ENCODE measurements at regions of chr17 and their contacts with region 1.

Region 1: DNA sequence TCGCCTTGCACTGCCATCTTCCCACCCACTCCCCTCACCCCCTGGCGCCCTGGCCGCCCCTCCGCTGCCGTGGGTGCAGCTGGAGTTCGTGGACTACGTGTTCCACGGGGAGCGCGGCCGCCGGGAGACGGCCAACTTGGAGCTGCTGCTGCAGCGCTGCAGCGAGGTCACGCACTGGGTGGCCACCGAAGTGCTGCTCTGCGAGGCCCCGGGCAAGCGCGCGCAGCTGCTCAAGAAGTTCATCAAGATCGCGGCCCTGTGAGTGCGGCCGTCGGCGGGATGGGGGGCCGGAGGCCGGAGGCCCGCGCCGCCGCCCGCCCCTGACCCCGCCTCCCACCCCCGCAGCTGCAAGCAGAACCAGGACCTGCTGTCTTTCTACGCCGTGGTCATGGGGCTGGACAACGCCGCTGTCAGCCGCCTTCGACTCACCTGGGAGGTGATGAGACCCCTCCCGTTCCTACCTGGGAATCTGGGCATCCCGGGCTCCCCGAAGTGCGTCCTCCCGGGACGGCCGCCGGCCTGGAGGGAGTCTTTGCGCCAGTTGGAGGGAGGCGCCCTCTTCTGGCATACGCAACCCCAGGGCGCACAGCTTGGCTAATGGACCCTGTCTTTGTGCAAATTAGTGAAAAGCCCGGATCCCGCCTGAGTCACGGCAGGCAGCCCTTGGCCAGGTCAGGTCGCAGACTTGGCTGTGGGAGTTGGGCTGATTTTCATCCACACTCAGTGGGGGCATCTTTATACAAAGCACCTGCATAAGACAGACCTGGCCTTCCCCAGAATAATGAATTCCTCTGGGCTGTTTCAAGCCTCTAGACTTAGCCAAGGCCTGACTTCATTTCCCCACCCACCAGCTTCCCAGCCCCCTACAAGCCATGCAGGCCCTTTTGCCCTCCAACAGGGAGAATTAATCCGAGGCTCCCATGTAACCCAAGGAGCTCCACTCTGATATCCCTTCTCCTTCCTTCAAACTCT is 14.3 kb downstream of the RAPGEFL1 start:
- DNase-seq: peak; percentile 41 to 82 (median 62)
- ATAC-seq: peak; percentile 79
- H3K4me3 ChIP-seq: peak overlapping the region; percentile 60
- H3K4me3 Mint-ChIP-seq: peak overlapping the region; percentile 96
- H3K27ac ChIP-seq: no peak overlapping the region
- H3K27ac Mint-ChIP-seq: peak overlapping the region; percentile 60
- H3K4me1 ChIP-seq: peaks cover 14% of the 10 kb centered on the region
- H3K4me1 Mint-ChIP-seq: peaks cover 5% of the 10 kb centered on the region
- H3K27me3 ChIP-seq: no peaks in the 10 kb centered on the region
- H3K27me3 Mint-ChIP-seq: no peaks in the 10 kb centered on the region
- CTCF ChIP-seq: peak; percentile 74

Region 2: GRCh38 chr17:40018211-40019121 is 173.1 kb before region 1 on chr17:
- CTCF ChIA-PET with region 1: interaction called, 10 read pairs
- POLR2A ChIA-PET with region 1: no interaction called
- intact Hi-C with region 1: loop called (anchors 1 to 2 kb)
- DNase-seq: no peak
- ATAC-seq: no peak
- H3K4me3 ChIP-seq: no peak overlapping the region
- H3K4me3 Mint-ChIP-seq: no peak overlapping the region
- H3K27ac ChIP-seq: no peak overlapping the region
- H3K27ac Mint-ChIP-seq: no peak overlapping the region
- H3K4me1 ChIP-seq: peaks cover 5% of the 10 kb centered on the region
- H3K4me1 Mint-ChIP-seq: peaks cover 6% of the 10 kb centered on the region
- H3K27me3 ChIP-seq: no peaks in the 10 kb centered on the region
- H3K27me3 Mint-ChIP-seq: no peaks in the 10 kb centered on the region
- CTCF ChIP-seq: no peak

Region 3: GRCh38 chr17:40168262-40168832 is 23.2 kb before region 1 on chr17:
- CTCF ChIA-PET with region 1: interaction called, 17 read pairs
- POLR2A ChIA-PET with region 1: no interaction called
- intact Hi-C with region 1: no loop called
- DNase-seq: peak in 8 of 14 experiments; percentile 14 to 82 (median 43)
- ATAC-seq: peak; percentile 89
- H3K4me3 ChIP-seq: no peak overlapping the region
- H3K4me3 Mint-ChIP-seq: no peak overlapping the region
- H3K27ac ChIP-seq: no peak overlapping the region
- H3K27ac Mint-ChIP-seq: peak overlapping the region; percentile 80
- H3K4me1 ChIP-seq: no peaks in the 10 kb centered on the region
- H3K4me1 Mint-ChIP-seq: peaks cover 9% of the 10 kb centered on the region
- H3K27me3 ChIP-seq: no peaks in the 10 kb centered on the region
- H3K27me3 Mint-ChIP-seq: no peaks in the 10 kb centered on the region
- CTCF ChIP-seq: peak; percentile 87

Region 4: GRCh38 chr17:40177275-40177874 is 14.1 kb before region 1 on chr17 and contains the start of gene RAPGEFL1:
- CTCF ChIA-PET with region 1: interaction called, 10 read pairs
- POLR2A ChIA-PET with region 1: interaction called, 8 read pairs
- intact Hi-C with region 1: no loop called
- DNase-seq: peak; percentile 72 to 94 (median 83)
- ATAC-seq: peak; percentile 97
- H3K4me3 ChIP-seq: peak within 1 kb of the TSS; percentile 58
- H3K4me3 Mint-ChIP-seq: peak within 1 kb of the TSS; percentile 67
- H3K27ac ChIP-seq: no peak within 1 kb of the TSS
- H3K27ac Mint-ChIP-seq: no peak within 1 kb of the TSS
- H3K4me1 ChIP-seq: peaks cover 20% of the 10 kb centered on the region
- H3K4me1 Mint-ChIP-seq: peaks cover 9% of the 10 kb centered on the region
- H3K27me3 ChIP-seq: no peaks in the 10 kb centered on the region
- H3K27me3 Mint-ChIP-seq: no peaks in the 10 kb centered on the region
- CTCF ChIP-seq: no peak
- total RNA-seq, gene RAPGEFL1: 7.7 to 9.4 TPM

Region 5: DNA sequence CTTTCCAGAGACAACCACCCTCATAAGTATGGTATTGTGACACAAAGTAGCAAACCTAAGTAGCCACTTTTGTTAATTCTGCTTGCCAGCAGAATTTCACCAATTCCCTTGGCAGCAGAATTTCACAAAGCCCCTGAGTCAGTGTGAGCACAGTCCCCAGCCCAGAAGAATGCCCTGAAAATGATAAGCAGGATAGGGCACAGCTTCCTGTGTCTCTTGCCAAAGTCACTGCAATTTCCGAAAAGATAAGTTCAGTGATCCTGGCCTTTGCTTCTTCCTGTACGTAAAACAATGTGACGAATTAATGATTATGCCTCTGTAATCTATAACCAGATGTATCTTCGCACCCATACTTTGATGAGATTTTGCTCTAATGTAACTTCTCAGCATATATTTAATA is 11.6 kb after region 1 on chr17:
- CTCF ChIA-PET with region 1: interaction called, 10 read pairs
- POLR2A ChIA-PET with region 1: interaction called, 5 read pairs
- intact Hi-C with region 1: no loop called
- DNase-seq: no peak
- ATAC-seq: no peak
- H3K4me3 ChIP-seq: no peak overlapping the region
- H3K4me3 Mint-ChIP-seq: no peak overlapping the region
- H3K27ac ChIP-seq: no peak overlapping the region
- H3K27ac Mint-ChIP-seq: no peak overlapping the region
- H3K4me1 ChIP-seq: peaks cover 7% of the 10 kb centered on the region
- H3K4me1 Mint-ChIP-seq: peaks cover 5% of the 10 kb centered on the region
- H3K27me3 ChIP-seq: no peaks in the 10 kb centered on the region
- H3K27me3 Mint-ChIP-seq: peaks cover 9% of the 10 kb centered on the region
- CTCF ChIP-seq: no peak

Region 6: DNA sequence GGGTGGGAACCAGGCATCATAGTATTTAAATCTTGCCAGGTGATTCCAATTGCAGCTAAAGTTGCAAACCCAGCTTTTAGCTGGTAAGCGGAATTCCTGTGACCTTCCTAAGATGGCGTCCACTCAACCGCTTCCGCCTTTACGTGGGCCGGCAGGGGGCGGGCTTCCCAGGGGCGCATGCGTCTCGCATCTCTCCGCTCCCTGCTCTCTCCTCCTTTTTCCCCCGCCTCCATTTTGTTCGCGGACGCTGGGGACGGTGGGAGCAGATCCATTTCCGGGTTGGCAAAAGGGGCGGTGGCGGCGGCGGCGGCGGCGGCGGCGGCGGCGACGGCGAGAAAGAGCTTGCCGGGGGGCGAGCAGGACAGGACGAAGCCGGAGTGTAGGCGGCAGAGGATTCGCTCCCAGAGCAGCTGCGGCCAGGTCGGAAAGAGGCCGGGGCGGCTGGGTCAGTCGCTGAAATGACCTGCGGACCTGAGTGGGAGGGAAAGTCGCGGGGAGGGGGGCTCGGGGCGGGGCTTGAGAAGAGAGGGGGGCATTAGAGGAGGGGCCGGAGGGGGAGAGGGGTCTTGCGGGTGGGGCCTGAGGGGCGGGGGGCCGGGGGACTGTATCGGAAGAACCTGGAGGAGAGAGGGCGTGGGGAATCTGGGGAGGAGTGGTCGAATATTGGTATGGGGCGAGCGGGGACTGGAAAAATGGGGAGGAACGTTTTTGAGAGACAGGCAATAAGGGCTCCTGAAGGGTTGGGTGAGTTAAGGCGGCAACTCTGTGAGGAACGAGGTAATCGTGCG is 27.7 kb after region 1 on chr17 and contains the start of gene WIPF2:
- CTCF ChIA-PET with region 1: interaction called, 12 read pairs
- POLR2A ChIA-PET with region 1: no interaction called
- intact Hi-C with region 1: no loop called
- DNase-seq: peak; percentile 91 to 98 (median 95)
- ATAC-seq: peak; percentile 90
- H3K4me3 ChIP-seq: peak within 1 kb of the TSS; percentile 58
- H3K4me3 Mint-ChIP-seq: peak within 1 kb of the TSS; percentile 94
- H3K27ac ChIP-seq: peak within 1 kb of the TSS; percentile 86 to 97
- H3K27ac Mint-ChIP-seq: peak within 1 kb of the TSS; percentile 88
- H3K4me1 ChIP-seq: peaks cover 25% of the 10 kb centered on the region
- H3K4me1 Mint-ChIP-seq: peaks cover 34% of the 10 kb centered on the region
- H3K27me3 ChIP-seq: no peaks in the 10 kb centered on the region
- H3K27me3 Mint-ChIP-seq: no peaks in the 10 kb centered on the region
- CTCF ChIP-seq: peak; percentile 62
- total RNA-seq, gene WIPF2: 17.3 to 21.3 TPM